HepG2 (cell line): ENCODE measurements at regions of chr3 and their contacts with region 1.

Region 1: DNA sequence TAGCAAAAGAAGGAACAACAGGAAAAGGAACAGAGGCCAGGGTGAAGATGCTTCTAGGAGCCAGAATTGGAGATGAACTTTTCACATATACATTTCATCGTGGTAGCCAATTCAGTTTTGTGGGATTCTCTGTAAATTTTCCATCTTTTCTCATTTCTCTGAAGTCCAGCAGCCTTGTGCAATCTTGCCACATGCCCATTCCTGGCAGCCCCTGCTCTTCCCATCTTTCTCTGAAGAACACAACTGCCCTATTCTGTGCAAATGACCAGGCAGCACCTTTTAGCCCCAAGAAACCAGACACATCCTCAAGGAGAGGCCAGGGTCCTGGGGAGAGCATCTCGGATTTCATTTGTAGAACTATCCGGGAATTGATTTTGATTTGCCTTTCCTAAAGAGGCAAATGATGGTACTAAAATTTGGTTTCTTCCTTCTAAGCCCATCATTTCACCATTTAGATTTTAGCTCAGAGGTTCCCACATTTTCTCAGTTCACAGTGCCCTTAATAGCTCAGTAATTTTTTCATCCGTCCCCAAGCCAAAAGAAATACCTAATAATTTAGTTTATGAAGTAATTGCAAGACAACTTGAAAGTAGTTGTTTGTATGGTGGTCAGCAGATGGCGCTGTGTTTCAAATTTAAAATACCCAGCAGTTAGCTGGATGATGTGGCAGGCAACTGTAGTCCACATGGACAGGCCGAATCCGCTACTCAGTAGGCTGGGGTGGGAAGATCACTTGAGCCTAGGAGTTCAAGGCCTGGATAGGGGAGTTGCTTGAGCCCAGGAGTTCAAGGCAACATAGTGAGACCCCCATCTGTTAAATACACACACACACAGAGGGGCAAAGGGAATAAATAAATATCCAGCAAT is 61.3 kb upstream of the ACKR4 start:
- DNase-seq: peak; percentile 69
- ATAC-seq: peak; percentile 90
- H3K4me3 ChIP-seq: no peak overlapping the region
- H3K27ac ChIP-seq: peak overlapping the region; percentile 14
- H3K4me1 ChIP-seq: peaks cover 23% of the 10 kb centered on the region
- H3K27me3 ChIP-seq: no peaks in the 10 kb centered on the region
- CTCF ChIP-seq: peak; percentile 75
- EP300 ChIP-seq: no peak
- POLR2A ChIP-seq: no peak
- RAD21 ChIP-seq: peak; percentile 45

Region 2: GRCh38 chr3:132435911-132436425 is 99.8 kb before region 1 on chr3:
- CTCF ChIA-PET with region 1: no interaction called
- POLR2A ChIA-PET with region 1: no interaction called
- in situ Hi-C with region 1: no loop called
- intact Hi-C with region 1: no loop called
- DNase-seq: no peak
- ATAC-seq: no peak
- H3K4me3 ChIP-seq: no peak overlapping the region
- H3K27ac ChIP-seq: no peak overlapping the region
- H3K4me1 ChIP-seq: no peaks in the 10 kb centered on the region
- H3K27me3 ChIP-seq: no peaks in the 10 kb centered on the region; a peak in 1 of 5 replicates
- CTCF ChIP-seq: no peak
- EP300 ChIP-seq: no peak
- POLR2A ChIP-seq: no peak
- RAD21 ChIP-seq: no peak

Region 3: DNA sequence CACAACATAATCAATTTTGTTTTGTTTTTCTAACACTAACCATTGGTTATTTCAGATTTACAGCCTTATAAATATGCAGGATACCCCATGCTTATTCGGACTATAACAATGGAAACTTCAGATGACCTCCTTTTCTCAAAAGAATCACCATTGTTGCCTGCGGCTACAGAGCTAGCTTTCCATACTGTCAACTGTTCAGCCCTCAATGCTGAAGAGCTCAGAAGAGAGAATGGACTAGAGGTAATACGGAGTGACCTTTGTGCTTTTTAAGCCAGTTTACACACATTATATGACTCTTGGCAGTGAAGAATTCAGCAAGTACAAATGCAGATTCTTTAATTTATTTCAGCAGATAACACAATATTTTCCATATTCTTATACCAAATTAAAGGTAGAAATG is 36.7 kb before region 1 on chr3:
- CTCF ChIA-PET with region 1: no interaction called
- POLR2A ChIA-PET with region 1: no interaction called
- in situ Hi-C with region 1: no loop called
- intact Hi-C with region 1: no loop called
- DNase-seq: peak; percentile 10
- ATAC-seq: peak; percentile 57; the same call in 2 of the 3 replicates
- H3K4me3 ChIP-seq: no peak overlapping the region
- H3K27ac ChIP-seq: no peak overlapping the region
- H3K4me1 ChIP-seq: no peaks in the 10 kb centered on the region
- H3K27me3 ChIP-seq: no peaks in the 10 kb centered on the region
- CTCF ChIP-seq: no peak
- EP300 ChIP-seq: no peak
- POLR2A ChIP-seq: no peak
- RAD21 ChIP-seq: no peak

Region 4: GRCh38 chr3:132641837-132642538 is 106.2 kb after region 1 on chr3:
- CTCF ChIA-PET with region 1: interaction called, 33 read pairs
- POLR2A ChIA-PET with region 1: no interaction called
- in situ Hi-C with region 1: loop called (anchors 5 kb)
- intact Hi-C with region 1: loop called (anchors 1 kb)
- DNase-seq: peak; percentile 45
- ATAC-seq: no peak; the same call in 2 of the 3 replicates
- H3K4me3 ChIP-seq: no peak overlapping the region
- H3K27ac ChIP-seq: no peak overlapping the region
- H3K4me1 ChIP-seq: no peaks in the 10 kb centered on the region
- H3K27me3 ChIP-seq: no peaks in the 10 kb centered on the region
- CTCF ChIP-seq: peak; percentile 57
- EP300 ChIP-seq: no peak
- POLR2A ChIP-seq: no peak
- RAD21 ChIP-seq: peak; percentile 60